ENCODE measurements at regions of chr15 and their contacts with region 1.

Region 1: GRCh38 chr15:26702381-26702780 is 70.5 kb downstream of the GABRB3 start:
- DNase-seq: no peak
- ATAC-seq: no peak
- H3K4me3 ChIP-seq: no peak overlapping the region
- H3K27ac ChIP-seq: no peak overlapping the region
- H3K4me1 ChIP-seq: no peaks in the 10 kb centered on the region
- H3K27me3 ChIP-seq: no peaks in the 10 kb centered on the region
- CTCF ChIP-seq: no peak
- POLR2A ChIP-seq: no peak
- RAD21 ChIP-seq: no peak

Region 2: GRCh38 chr15:26295336-26296085 is 406.9 kb before region 1 on chr15:
- CTCF ChIA-PET with region 1: no interaction called
- POLR2A ChIA-PET with region 1: no interaction called
- dilution Hi-C with region 1: no loop called
- in situ Hi-C with region 1: no loop called
- intact Hi-C with region 1: no loop called
- DNase-seq: no peak
- ATAC-seq: no peak
- H3K4me3 ChIP-seq: no peak overlapping the region
- H3K27ac ChIP-seq: no peak overlapping the region
- H3K4me1 ChIP-seq: no peaks in the 10 kb centered on the region
- H3K27me3 ChIP-seq: no peaks in the 10 kb centered on the region
- CTCF ChIP-seq: no peak
- POLR2A ChIP-seq: no peak
- RAD21 ChIP-seq: no peak

Region 3: DNA sequence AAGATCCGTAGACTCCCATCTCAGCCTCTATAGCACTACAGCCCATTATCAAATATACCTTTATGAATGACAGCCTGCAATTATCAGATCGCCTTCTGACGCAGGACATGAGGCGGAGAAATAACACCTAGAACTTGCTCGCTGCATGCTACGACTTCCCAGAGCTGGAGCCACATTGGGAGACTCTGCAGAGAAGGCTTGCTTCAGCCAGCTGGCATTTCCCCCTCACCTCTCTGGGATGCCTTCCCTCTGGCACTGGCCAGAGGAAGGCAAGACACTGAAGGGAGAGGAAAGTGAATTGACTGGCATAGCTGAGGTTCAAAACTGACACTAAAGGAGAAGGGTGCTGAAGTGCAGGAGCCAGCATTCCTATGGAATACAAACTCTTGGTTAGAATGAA is 61.2 kb before region 1 on chr15:
- CTCF ChIA-PET with region 1: no interaction called
- POLR2A ChIA-PET with region 1: no interaction called
- dilution Hi-C with region 1: no loop called
- in situ Hi-C with region 1: loop called (anchors 10 kb)
- intact Hi-C with region 1: no loop called
- DNase-seq: no peak
- ATAC-seq: no peak
- H3K4me3 ChIP-seq: no peak overlapping the region
- H3K27ac ChIP-seq: no peak overlapping the region
- H3K4me1 ChIP-seq: no peaks in the 10 kb centered on the region
- H3K27me3 ChIP-seq: no peaks in the 10 kb centered on the region
- CTCF ChIP-seq: no peak
- POLR2A ChIP-seq: no peak
- RAD21 ChIP-seq: no peak

Region 4: GRCh38 chr15:26767169-26767670 is 64.8 kb after region 1 on chr15:
- CTCF ChIA-PET with region 1: no interaction called
- POLR2A ChIA-PET with region 1: no interaction called
- dilution Hi-C with region 1: no loop called
- in situ Hi-C with region 1: loop called (anchors 10 kb)
- intact Hi-C with region 1: no loop called
- DNase-seq: no peak
- ATAC-seq: no peak
- H3K4me3 ChIP-seq: no peak overlapping the region
- H3K27ac ChIP-seq: no peak overlapping the region
- H3K4me1 ChIP-seq: no peaks in the 10 kb centered on the region
- H3K27me3 ChIP-seq: peaks cover 7% of the 10 kb centered on the region; the same call in 1 of the 2 replicates
- CTCF ChIP-seq: no peak
- POLR2A ChIP-seq: no peak
- RAD21 ChIP-seq: no peak

Region 5: DNA sequence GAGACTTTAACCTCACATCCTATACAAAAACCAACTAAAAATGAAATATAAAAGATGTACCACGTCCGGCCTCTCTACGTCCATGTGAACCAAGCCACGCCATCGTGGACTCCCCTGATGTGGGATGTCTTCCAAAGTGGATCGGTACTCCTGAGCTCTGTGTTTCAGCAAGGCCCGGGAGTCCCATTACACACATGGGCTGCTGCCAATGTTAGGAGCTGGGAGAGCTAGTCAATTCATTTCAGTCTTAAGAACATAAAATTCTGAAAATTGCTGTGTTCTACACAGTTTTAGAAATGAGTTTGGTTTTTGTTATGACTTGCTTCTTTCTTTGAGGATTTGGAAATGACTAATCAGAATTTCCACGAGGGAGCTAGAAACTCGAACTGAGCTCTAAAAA is 399.6 kb after region 1 on chr15:
- CTCF ChIA-PET with region 1: no interaction called
- POLR2A ChIA-PET with region 1: no interaction called
- dilution Hi-C with region 1: no loop called
- in situ Hi-C with region 1: no loop called
- intact Hi-C with region 1: no loop called
- DNase-seq: no peak
- ATAC-seq: no peak
- H3K4me3 ChIP-seq: no peak overlapping the region
- H3K27ac ChIP-seq: no peak overlapping the region
- H3K4me1 ChIP-seq: no peaks in the 10 kb centered on the region
- H3K27me3 ChIP-seq: no peaks in the 10 kb centered on the region
- CTCF ChIP-seq: no peak
- POLR2A ChIP-seq: no peak
- RAD21 ChIP-seq: no peak

Region 6: DNA sequence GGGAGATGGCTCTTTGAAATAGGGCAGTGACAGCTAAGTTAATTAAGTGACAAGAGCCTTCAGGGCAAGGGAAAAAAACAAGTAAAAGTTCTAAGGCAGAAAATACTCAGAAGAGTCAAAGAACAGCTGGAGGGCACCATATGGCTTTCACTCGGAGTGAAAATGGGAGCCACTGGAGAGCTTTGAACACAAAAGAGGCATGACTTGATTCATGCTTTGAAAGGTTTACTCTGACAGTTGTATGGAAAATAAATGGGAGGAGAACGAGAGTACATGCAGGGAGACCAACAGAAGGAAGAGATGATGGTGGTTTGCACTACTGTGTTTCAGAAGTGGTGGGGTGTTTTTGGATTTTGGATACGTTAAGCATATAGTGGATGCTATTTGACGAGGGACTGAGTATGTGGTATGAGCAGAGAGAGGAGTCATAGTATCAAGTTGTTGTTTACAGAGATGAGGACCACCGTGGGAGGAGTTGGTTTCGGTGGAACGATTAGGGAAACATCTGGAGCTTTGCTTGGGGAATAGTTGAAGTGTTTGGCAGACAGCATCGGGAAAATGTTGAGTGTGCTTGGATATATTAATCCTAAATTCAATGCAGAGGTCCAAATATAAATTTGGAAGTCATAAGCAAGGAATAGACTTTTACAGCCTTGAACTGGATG is 680.1 kb after region 1 on chr15:
- CTCF ChIA-PET with region 1: no interaction called
- POLR2A ChIA-PET with region 1: no interaction called
- dilution Hi-C with region 1: no loop called
- in situ Hi-C with region 1: no loop called
- intact Hi-C with region 1: no loop called
- DNase-seq: no peak
- ATAC-seq: no peak
- H3K4me3 ChIP-seq: no peak overlapping the region
- H3K27ac ChIP-seq: no peak overlapping the region
- H3K4me1 ChIP-seq: no peaks in the 10 kb centered on the region
- H3K27me3 ChIP-seq: no peaks in the 10 kb centered on the region
- CTCF ChIP-seq: no peak
- POLR2A ChIP-seq: no peak
- RAD21 ChIP-seq: no peak